Activated CD4-positive, alpha-beta T cell treated with anti-CD3 and anti-CD28 coated beads, Interleukin-2, amount 10 ng/mL, durations not matched to agents 24 days and 14 days (primary cell): ENCODE measurements at regions of chr6 and their contacts with region 1.

Region 1: DNA sequence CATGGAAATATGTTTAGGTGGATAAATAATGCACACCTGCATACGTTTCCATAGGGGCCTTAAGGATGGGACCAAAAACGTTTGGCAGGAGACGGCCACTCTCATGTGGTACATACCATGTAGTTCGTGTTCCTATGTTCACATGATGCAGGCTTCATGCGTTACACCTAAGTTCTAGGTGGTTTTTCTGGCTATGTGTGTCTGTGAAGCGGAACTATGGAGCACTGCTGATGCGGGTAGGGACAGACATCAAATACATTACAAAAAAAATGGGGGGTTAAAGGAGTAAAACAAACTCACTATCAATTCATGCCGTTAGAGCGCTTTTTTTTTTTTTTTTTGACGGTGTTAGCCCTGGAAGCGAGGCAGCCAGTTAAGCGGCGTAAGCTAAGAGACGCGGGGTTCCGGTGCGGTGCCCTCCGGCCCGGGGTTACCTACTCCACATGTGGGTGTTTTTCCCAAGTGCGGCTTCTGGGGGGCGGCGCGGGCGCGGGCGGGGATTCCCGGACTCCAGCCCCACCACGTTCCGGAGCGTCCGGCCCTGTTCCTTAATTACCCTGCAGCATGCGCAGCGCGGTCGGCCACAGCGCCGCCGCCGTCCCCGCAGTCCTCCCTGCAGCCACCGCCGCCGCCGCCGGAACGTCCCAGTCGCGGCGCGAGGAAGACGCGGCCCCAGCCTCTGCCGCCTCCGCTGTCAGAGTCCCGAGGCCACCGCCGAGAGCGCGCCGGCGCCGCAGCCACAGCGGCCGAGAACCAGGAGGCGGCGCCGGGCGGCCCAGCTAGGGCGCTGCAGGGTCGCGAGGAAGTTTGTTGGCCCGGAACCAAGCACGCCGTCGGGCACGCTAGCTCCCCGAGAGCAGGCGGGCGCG is 648 bp downstream of the COL19A1 start:
- DNase-seq: peak; percentile 87
- H3K4me3 Mint-ChIP-seq: peak overlapping the region; percentile 79
- H3K27ac Mint-ChIP-seq: peak overlapping the region; percentile 48
- H3K4me1 Mint-ChIP-seq: peaks cover 18% of the 10 kb centered on the region
- H3K27me3 Mint-ChIP-seq: peaks cover 70% of the 10 kb centered on the region

Region 2: GRCh38 chr6:69732640-69733039 is 134.4 kb before region 1 on chr6:
- intact Hi-C with region 1: loop called (anchors 10 kb)
- DNase-seq: no peak
- H3K4me3 Mint-ChIP-seq: no peak overlapping the region
- H3K27ac Mint-ChIP-seq: no peak overlapping the region
- H3K4me1 Mint-ChIP-seq: no peaks in the 10 kb centered on the region
- H3K27me3 Mint-ChIP-seq: no peaks in the 10 kb centered on the region

Region 3: DNA sequence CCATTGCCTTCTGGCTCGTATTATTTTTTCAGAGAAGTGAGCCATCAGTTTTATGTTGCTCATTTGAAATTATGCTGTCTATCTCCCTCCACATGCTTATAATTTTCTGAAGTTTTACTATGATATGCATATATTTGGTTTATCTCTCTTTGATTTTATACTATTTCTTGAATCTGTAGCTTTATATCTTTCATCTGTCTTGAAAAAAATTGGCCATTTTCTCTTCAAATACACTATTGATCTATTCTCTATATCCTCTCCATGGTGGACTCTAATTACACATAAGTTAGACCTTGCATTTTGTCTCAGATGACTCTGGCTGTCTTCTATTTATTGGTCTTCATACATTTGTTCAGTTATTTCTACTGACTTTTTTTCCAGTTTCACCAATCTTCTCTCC is 14.3 kb before region 1 on chr6:
- intact Hi-C with region 1: no loop called
- DNase-seq: no peak
- H3K4me3 Mint-ChIP-seq: no peak overlapping the region
- H3K27ac Mint-ChIP-seq: no peak overlapping the region
- H3K4me1 Mint-ChIP-seq: no peaks in the 10 kb centered on the region
- H3K27me3 Mint-ChIP-seq: peaks cover 26% of the 10 kb centered on the region

Region 4: DNA sequence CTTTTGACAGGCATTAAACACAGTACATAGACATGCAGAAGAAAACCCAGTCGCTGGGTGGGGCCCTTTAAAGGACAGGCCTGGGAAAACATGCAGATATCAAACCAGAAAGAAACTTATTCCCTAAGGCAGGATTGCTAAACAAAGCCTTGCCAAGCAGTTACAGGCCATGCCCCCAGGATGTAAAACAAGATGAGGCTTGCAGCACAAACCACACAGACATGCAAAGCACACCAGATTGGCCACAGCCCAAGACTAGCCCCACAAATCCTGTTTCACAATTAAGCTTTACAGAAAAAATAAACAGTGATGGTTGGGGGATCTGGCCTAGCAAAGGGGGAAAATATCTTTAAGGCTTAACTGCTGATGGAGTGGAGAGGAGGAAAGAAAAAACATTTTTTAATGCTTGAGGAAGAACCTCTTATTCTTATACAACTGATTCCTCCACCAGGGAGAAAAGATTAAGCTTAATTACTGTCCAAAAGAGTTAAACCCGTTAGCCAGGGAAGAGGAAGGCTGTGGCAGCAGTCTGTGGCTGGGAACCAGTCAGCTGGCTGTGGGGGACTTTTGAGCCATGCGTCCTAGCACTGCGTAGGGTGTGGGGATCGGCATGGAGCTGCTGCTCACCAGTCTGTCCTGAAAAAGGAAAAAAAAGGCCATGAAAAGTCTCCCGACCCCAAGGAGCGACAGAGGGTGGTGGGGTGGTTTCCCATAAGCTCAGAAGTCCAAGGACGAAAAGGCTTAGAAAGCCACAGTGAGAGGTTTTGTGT is 27.8 kb after region 1 on chr6:
- intact Hi-C with region 1: no loop called
- DNase-seq: no peak
- H3K4me3 Mint-ChIP-seq: no peak overlapping the region
- H3K27ac Mint-ChIP-seq: no peak overlapping the region
- H3K4me1 Mint-ChIP-seq: no peaks in the 10 kb centered on the region
- H3K27me3 Mint-ChIP-seq: no peaks in the 10 kb centered on the region